ENCODE measurements at regions of chr5 and their contacts with region 1.

Region 1: DNA sequence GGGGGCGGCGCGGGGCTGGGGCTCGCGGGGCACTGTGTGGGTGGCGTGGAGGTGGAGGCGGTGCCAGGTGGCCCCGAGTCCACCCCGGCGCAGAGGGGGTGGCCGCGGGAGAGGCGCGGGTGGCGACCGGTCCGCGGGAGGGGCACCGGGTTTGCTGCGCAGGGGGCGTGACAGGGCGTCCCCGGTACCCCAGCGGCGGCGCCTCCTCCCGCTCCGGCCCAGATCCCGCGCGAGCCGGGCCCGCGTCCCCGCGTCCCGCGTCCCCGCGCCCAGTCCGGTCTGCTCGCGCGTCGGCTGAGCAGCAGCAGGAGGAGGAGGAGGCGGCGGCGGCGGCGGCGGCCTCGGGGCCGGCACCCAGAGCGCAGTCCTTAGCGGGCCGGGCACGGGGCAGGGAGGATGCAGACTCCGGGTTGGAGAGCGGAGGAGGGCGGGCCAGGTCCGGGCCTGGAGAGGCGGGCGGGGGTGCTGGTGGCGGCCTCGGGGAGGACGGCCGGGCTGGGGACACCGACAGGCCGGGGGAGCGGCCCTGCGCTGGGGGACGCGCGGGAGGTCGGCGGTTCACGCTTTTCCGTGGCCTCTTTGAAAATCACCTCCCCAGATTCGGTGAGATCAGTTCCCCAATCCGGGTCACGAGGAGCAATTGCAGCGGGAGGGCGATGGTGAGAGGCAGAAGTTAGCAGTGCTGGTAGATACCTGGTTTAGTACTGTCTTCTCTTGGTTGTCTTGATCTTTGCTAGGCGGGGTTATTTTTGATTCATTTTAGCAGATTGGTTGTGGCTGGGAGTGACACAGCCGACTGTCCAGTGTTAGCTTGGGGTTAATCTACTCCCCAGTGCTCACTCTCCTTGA is 1.7 kb downstream of the TRIO start:
- DNase-seq: peak; percentile 73
- ATAC-seq: peak; percentile 52

Region 2: GRCh38 chr5:14184725-14185124 is 39.9 kb after region 1 on chr5:
- intact Hi-C with region 1: loop called (anchors 5 kb)
- DNase-seq: no peak
- ATAC-seq: no peak

Region 3: DNA sequence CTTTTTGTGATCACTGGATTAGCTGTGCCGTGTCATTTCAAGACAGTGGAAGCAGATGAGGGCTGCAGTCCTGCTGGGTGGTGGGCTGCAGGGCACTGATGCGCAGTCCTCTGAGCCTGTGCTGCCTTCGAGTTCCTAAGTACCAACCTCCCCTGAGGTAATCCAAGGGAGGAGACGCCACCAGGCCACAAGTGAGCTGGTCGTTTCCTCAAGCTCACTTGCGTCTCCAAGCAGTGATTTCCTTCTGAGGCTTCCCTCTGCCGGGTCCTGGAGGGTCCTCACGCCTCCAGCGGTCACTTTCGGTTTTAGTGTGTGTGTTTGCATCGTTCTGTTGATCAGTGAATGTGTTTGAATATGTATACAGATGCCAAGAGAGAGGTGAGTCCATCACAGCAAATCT is 114.0 kb after region 1 on chr5:
- intact Hi-C with region 1: loop called (anchors 5 kb)
- DNase-seq: no peak
- ATAC-seq: no peak

Region 4: DNA sequence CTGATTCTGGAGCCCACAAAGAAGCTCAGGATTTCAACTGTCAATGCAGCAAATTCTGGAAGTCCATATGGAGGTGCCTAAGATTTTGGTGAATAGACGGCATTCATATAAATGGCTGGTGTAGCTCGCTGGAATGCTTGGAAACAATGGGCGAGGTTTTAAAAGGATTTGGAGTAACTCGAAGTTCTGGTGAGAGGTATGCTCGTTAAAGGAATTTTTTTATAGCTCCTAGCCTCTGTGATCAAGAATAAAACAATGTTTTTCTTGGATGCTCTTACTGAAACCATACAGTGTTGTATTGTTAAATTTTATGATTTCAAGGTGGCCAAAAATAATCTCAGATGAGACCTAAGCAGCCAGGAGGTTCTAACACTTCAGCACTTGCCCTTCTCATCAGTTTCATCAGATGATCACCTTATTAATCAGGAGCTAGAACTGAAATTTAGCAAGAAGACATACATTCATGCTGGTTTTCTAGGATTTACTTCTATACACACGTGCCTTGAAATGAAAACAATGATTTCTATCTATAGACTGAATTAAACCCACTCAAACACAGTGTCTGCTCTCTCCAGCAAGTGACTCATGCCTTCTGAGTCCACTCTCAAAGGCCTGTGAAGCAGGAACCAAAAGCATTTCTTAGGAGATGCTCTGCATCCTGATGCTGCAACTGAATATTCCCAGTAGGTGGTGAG is 598.9 kb after region 1 on chr5:
- intact Hi-C with region 1: no loop called
- DNase-seq: no peak
- ATAC-seq: no peak